Activated CD4-positive, alpha-beta T cell treated with anti-CD3 and anti-CD28 coated beads, Interleukin-2, amount 10 ng/mL, durations not matched to agents 24 days and 14 days (primary cell): ENCODE measurements at regions of chr10 and their contacts with region 1.

Region 1: DNA sequence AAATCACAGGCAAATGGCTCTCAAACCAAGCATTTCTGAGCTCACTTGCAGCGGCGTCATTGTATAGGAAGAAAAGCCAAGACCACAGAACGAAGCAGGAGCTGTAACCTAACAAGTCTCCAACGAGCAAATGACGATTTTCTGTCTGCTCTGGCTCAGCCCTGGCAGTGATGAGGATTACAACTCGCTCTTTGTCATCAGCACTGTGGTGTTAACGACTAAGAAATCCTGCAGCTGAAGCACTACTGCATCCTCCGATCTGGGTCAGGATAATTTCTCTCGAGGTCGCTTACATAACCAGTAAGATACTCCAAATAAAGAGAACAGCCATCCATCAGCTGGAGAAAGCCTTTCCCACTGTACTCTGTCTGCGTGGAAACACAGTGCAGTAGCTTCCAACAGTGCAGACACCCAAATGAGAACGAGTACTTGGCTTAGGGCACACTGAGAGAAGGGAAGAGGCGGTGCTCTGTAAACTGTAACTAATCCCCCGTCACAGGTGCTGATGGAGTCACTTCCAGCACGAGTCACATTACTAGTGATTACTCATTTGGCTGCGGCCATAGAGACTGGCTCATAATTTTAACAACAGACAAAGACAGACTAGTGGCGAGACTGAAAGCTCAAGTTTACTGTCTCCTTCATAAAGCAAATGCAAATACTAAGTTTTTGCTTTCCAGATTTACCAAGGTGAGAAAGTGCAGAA is 135.8 kb downstream of the NRBF2 start:
- DNase-seq: peak; percentile 95
- H3K4me3 Mint-ChIP-seq: peak overlapping the region; percentile 93
- H3K27ac Mint-ChIP-seq: peak overlapping the region; percentile 99
- H3K4me1 Mint-ChIP-seq: peaks cover 21% of the 10 kb centered on the region
- H3K27me3 Mint-ChIP-seq: no peaks in the 10 kb centered on the region

Region 2: GRCh38 chr10:62373995-62374861 is 894.7 kb before region 1 on chr10 and contains the start of gene ZNF365:
- intact Hi-C with region 1: loop called (anchors 5 kb)
- DNase-seq: peak; percentile 76
- H3K4me3 Mint-ChIP-seq: peak within 1 kb of the TSS; percentile 84
- H3K27ac Mint-ChIP-seq: no peak within 1 kb of the TSS
- H3K4me1 Mint-ChIP-seq: peaks cover 6% of the 10 kb centered on the region
- H3K27me3 Mint-ChIP-seq: peaks cover 40% of the 10 kb centered on the region
- total RNA-seq, gene ZNF365: not detected in 2 replicates

Region 3: DNA sequence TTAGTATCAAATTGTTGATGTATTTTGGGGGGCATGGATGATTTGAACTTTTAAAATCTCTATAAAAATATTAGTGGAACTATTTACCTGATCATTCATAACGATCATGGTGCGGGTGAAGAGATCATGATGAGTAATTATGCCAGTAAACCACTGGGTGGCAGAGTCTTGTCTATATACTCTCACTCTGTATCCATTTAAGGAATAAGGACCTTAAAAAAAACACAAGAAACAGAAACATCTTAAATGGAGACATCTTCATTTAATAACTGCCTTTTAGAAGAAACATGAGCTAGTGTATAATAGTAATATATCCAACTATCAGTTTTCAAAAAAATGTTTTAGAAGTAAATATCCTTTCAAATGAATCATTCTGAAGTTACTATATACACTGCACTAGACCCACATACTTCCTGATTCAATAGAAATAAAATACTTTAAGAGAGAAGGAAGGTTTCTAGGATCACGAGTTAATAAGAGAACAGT is 51.8 kb before region 1 on chr10:
- intact Hi-C with region 1: loop called (anchors 1 kb)
- DNase-seq: peak; percentile 75
- H3K4me3 Mint-ChIP-seq: peak overlapping the region; percentile 15
- H3K27ac Mint-ChIP-seq: no peak overlapping the region
- H3K4me1 Mint-ChIP-seq: peaks cover 46% of the 10 kb centered on the region
- H3K27me3 Mint-ChIP-seq: no peaks in the 10 kb centered on the region

Region 4: DNA sequence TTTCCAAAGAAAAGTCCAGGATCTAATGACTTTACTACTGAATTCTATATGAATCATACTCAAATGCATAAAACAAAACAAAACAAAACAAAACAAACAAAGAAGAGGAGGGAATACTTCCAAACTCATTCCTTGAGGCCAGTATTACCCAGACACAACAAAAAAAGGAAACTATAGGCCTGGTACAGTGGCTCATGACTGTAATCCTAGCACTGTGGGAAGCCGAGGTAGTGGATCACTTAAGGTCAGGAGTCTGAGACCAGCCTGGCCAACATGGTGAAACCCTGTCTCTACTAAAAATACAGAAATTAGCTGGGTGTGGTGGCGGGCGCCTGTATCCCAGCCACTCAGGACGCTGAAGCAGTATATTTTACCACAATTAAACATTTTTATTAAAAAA is 21.2 kb before region 1 on chr10:
- intact Hi-C with region 1: no loop called
- DNase-seq: no peak
- H3K4me3 Mint-ChIP-seq: no peak overlapping the region
- H3K27ac Mint-ChIP-seq: no peak overlapping the region
- H3K4me1 Mint-ChIP-seq: peaks cover 31% of the 10 kb centered on the region
- H3K27me3 Mint-ChIP-seq: no peaks in the 10 kb centered on the region

Region 5: GRCh38 chr10:63355682-63356081 is 86.7 kb after region 1 on chr10:
- intact Hi-C with region 1: loop called (anchors 1 kb)
- DNase-seq: no peak
- H3K4me3 Mint-ChIP-seq: no peak overlapping the region
- H3K27ac Mint-ChIP-seq: peak overlapping the region; percentile 63
- H3K4me1 Mint-ChIP-seq: peaks cover 14% of the 10 kb centered on the region
- H3K27me3 Mint-ChIP-seq: no peaks in the 10 kb centered on the region

Region 6: GRCh38 chr10:63396133-63396761 is 127.3 kb after region 1 on chr10:
- intact Hi-C with region 1: no loop called
- DNase-seq: no peak
- H3K4me3 Mint-ChIP-seq: no peak overlapping the region
- H3K27ac Mint-ChIP-seq: no peak overlapping the region
- H3K4me1 Mint-ChIP-seq: peaks cover 13% of the 10 kb centered on the region
- H3K27me3 Mint-ChIP-seq: no peaks in the 10 kb centered on the region

Region 7: DNA sequence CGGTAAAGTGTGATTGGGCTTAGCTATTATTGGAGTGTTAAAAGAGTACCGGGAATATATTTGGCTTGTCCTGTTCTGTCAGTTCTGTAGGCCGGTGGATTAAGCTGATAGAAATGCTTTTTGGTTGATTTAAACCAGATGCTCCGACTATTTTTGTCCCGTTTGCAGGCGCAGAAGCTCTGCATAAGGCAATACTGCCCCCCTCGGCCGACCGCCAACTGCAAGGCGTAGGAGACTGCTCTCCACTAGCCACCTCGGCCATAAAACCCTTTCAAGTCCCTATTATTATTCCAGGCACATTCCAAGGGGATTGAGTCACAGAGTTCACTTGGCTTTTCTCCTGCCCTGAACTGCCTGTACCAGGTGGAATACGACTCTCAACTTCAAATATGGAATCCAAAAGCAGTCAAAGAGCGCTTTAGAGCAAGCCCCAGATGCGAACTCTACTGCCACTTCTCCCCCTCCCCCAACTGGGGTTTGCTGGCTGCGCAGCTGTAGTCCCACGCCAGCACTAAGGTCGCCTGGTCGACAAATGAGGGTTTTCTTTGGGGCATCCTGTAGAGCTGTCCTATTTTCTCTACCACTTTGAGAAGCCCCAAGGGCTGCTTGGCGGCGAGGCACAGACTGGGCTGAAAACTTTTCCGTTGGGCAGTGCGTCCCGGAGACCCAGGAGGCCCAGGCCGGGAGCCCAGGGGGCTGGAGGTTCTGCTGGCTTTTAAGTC is 360.6 kb after region 1 on chr10:
- intact Hi-C with region 1: loop called (anchors 1 kb)
- DNase-seq: peak; percentile 94
- H3K4me3 Mint-ChIP-seq: peak overlapping the region; percentile 94
- H3K27ac Mint-ChIP-seq: peak overlapping the region; percentile 94
- H3K4me1 Mint-ChIP-seq: peaks cover 38% of the 10 kb centered on the region
- H3K27me3 Mint-ChIP-seq: peaks cover 1% of the 10 kb centered on the region